Prostate gland (tissue), 2 donors: ENCODE measurements at regions of chr18 and their contacts with region 1.

Region 1: DNA sequence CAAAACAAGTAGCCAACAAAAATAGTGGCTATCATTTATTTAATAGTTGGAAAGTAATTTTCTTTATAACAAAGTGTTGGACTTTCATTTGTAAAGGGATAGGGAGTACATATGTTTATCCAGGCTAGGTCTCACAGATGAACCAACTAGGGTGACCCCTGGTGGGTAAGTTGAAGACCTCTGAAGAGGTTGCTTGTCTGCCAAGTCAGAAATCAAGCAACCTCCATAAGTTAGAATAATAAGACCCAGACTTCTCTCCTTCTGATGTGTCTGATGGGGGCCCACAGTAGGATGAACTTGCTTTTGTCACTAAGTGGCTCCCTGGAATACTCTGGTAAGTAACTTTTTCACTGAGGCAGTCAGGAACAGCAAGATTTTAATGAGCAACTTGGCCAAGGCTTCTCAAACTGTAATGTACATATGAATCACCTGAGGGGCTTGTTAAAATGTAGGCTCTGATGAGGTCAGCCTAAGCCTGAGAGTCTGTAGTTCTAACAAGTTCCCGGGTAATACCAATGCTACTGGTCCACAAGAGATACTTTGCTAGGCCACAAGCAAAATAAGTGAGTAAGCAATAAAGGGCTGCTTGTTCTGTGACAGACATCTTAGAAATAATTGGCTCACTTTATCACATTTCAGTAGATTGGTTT is 319.6 kb downstream of the PIK3C3 start:
- DNase-seq: no peak
- H3K4me3 ChIP-seq: no peak overlapping the region
- H3K27ac ChIP-seq: no peak overlapping the region
- H3K4me1 ChIP-seq: no peaks in the 10 kb centered on the region
- H3K27me3 ChIP-seq: no peaks in the 10 kb centered on the region
- CTCF ChIP-seq: no peak
- POLR2A ChIP-seq: no peak

Region 2: GRCh38 chr18:42114310-42114943 is 160.2 kb before region 1 on chr18:
- intact Hi-C with region 1: loop called (anchors 10 kb)
- DNase-seq: peak; percentile 56
- H3K4me3 ChIP-seq: no peak overlapping the region
- H3K27ac ChIP-seq: no peak overlapping the region
- H3K4me1 ChIP-seq: no peaks in the 10 kb centered on the region
- H3K27me3 ChIP-seq: no peaks in the 10 kb centered on the region
- CTCF ChIP-seq: peak; percentile 64 to 84 (median 75)
- POLR2A ChIP-seq: no peak